SK-N-SH (cell line): ENCODE measurements at regions of chr2 and their contacts with region 1.

Region 1: GRCh38 chr2:94956797-94957391 is 68.6 kb upstream of the MAL start:
- DNase-seq: peak; percentile 52
- H3K4me3 ChIP-seq: no peak overlapping the region; a peak in 1 of 4 replicates
- H3K27ac ChIP-seq: no peak overlapping the region
- H3K4me1 ChIP-seq: no peaks in the 10 kb centered on the region
- H3K27me3 ChIP-seq: peaks cover 16% of the 10 kb centered on the region; the same call in 1 of the 2 replicates
- CTCF ChIP-seq: peak; percentile 86
- EP300 ChIP-seq: no peak
- RAD21 ChIP-seq: peak; percentile 43; the same call in 1 of the 2 replicates

Region 2: DNA sequence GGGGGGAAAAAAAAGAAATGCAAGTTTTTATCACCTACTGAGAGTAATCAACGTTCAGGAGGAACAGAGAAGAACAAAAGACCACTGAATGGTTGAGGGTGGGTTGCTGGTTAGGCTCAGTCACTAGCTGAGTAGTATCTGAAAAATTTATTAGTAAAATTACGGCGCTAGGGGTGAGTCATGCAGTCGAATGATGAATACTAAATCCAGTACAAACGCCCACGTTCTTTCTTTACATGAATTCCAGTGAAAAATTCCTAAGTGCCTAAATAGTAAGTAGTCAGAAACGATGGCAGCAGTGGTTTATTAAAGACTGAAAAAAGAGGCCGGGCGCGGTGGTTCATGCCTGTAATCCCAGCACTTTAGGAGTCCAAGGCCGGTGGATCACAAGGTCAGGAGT is 33.7 kb before region 1 on chr2:
- CTCF ChIA-PET with region 1: interaction called, 10 read pairs
- POLR2A ChIA-PET with region 1: no interaction called
- DNase-seq: no peak
- H3K4me3 ChIP-seq: no peak overlapping the region
- H3K27ac ChIP-seq: no peak overlapping the region
- H3K4me1 ChIP-seq: no peaks in the 10 kb centered on the region
- H3K27me3 ChIP-seq: no peaks in the 10 kb centered on the region; the same call in 1 of the 2 replicates
- CTCF ChIP-seq: no peak
- EP300 ChIP-seq: no peak
- RAD21 ChIP-seq: no peak

Region 3: DNA sequence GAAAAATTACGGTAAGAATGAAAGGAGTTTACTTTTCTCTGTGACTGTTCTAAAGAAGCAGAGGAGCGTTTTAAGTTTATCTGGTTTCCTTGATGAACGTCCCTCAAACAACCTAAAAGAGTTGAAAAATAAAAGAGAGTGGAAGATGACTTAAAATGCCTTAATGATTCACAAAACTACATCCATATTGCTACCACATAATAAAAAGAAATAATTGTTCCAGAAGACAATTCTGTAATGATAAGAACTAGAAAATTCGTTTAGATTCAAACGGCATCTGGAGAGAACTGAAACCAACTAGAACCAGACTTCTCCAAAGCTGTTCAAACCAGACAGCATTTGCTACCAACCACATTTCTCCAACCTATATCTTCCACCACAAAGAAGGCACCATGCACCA is 17.5 kb before region 1 on chr2:
- CTCF ChIA-PET with region 1: interaction called, 13 read pairs
- POLR2A ChIA-PET with region 1: no interaction called
- DNase-seq: no peak
- H3K4me3 ChIP-seq: no peak overlapping the region
- H3K27ac ChIP-seq: no peak overlapping the region
- H3K4me1 ChIP-seq: no peaks in the 10 kb centered on the region
- H3K27me3 ChIP-seq: peaks cover 6% of the 10 kb centered on the region
- CTCF ChIP-seq: no peak
- EP300 ChIP-seq: no peak
- RAD21 ChIP-seq: no peak

Region 4: GRCh38 chr2:94970353-94970752 is 13.5 kb after region 1 on chr2:
- CTCF ChIA-PET with region 1: interaction called, 19 read pairs
- POLR2A ChIA-PET with region 1: no interaction called
- DNase-seq: no peak
- H3K4me3 ChIP-seq: no peak overlapping the region
- H3K27ac ChIP-seq: no peak overlapping the region
- H3K4me1 ChIP-seq: no peaks in the 10 kb centered on the region
- H3K27me3 ChIP-seq: peaks cover 26% of the 10 kb centered on the region; the same call in 1 of the 2 replicates
- CTCF ChIP-seq: no peak
- EP300 ChIP-seq: no peak
- RAD21 ChIP-seq: no peak

Region 5: GRCh38 chr2:94980406-94980805 is 23.5 kb after region 1 on chr2:
- CTCF ChIA-PET with region 1: interaction called, 13 read pairs
- POLR2A ChIA-PET with region 1: no interaction called
- DNase-seq: no peak
- H3K4me3 ChIP-seq: no peak overlapping the region
- H3K27ac ChIP-seq: no peak overlapping the region
- H3K4me1 ChIP-seq: no peaks in the 10 kb centered on the region
- H3K27me3 ChIP-seq: peaks cover 45% of the 10 kb centered on the region; the same call in 1 of the 2 replicates
- CTCF ChIP-seq: no peak
- EP300 ChIP-seq: no peak
- RAD21 ChIP-seq: no peak